Lower leg skin (tissue), 4 donors: ENCODE measurements at regions of chr13 and their contacts with region 1.

Region 1: GRCh38 chr13:94620286-94620896 is 18.7 kb downstream of the GPR180 start:
- DNase-seq: no peak
- H3K4me3 ChIP-seq: no peak overlapping the region
- CTCF ChIP-seq: no peak
- POLR2A ChIP-seq: no peak

Region 2: GRCh38 chr13:94435604-94436226 is 184.7 kb before region 1 on chr13:
- intact Hi-C with region 1: loop called (anchors 10 kb)
- DNase-seq: no peak
- H3K4me3 ChIP-seq: no peak overlapping the region
- CTCF ChIP-seq: no peak
- POLR2A ChIP-seq: no peak

Region 3: DNA sequence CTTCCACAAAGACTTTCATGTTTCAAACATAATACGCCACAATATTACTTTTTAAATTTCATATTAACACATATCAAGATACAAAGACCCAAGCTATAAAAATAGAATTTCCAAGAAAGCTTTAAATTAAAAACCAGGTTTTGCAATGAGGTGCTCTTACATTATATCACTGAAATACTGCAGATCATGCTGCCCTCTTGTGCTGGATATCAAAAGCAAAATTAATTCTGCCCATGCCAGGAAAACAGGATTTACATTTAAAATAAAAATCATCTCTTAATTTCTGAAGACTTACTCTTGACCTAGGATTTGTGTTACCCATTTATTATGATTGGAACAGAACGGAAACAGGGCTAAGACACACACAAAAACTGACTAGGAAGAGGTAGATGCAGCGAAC is 535.8 kb after region 1 on chr13:
- intact Hi-C with region 1: loop called (anchors 5 kb)
- DNase-seq: no peak
- H3K4me3 ChIP-seq: no peak overlapping the region
- CTCF ChIP-seq: no peak
- POLR2A ChIP-seq: no peak

Region 4: GRCh38 chr13:95191821-95192563 is 571.6 kb after region 1 on chr13:
- intact Hi-C with region 1: no loop called
- DNase-seq: peak; percentile 35 to 88
- H3K4me3 ChIP-seq: no peak overlapping the region
- CTCF ChIP-seq: no peak
- POLR2A ChIP-seq: no peak

Region 5: GRCh38 chr13:95644601-95645052 is 1024.2 kb after region 1 on chr13 and contains the start of gene DZIP1:
- intact Hi-C with region 1: loop called (anchors 5 kb)
- DNase-seq: peak; percentile 28 to 92
- H3K4me3 ChIP-seq: peak within 1 kb of the TSS; percentile 28
- CTCF ChIP-seq: no peak
- POLR2A ChIP-seq: no peak
- total RNA-seq, gene DZIP1: 0.42 to 2.7 (median 1.8) TPM